HCT116 (cell line): ENCODE measurements at regions of chr4 and their contacts with region 1.

Region 1: GRCh38 chr4:114780205-114780604 is 181.6 kb downstream of the UGT8 start:
- DNase-seq: peak; percentile 24
- ATAC-seq: peak; percentile 87
- H3K4me3 ChIP-seq: no peak overlapping the region
- H3K27ac ChIP-seq: no peak overlapping the region
- H3K4me1 ChIP-seq: no peaks in the 10 kb centered on the region
- H3K27me3 ChIP-seq: no peaks in the 10 kb centered on the region
- CTCF ChIP-seq: peak; percentile 39 to 75 (median 44); a peak in 4 of 6 replicates
- POLR2A ChIP-seq: no peak
- RAD21 ChIP-seq: peak; percentile 82

Region 2: DNA sequence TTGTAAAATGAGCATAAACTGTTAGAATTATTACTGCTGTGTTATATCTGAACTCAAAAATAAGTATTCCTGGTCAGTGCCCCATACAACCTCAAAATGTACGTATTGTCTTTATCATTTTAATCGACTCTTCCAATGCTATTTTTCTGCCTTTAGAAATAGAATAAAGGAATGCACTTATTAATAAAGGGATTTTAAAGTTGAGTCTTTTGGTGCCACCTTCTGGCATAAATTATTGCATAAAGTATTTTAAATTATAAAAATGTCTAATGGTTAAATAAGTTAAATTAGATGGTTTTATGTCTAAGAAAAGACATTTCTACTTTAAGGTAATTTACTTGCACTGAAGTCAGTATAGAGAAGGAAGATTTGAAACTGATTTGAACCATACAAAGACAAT is 757.2 kb after region 1 on chr4:
- CTCF ChIA-PET with region 1: interaction called, 7 read pairs
- POLR2A ChIA-PET with region 1: no interaction called
- RAD21 ChIA-PET with region 1: no interaction called
- intact Hi-C with region 1: loop called (anchors 5 kb)
- DNase-seq: peak; percentile 12
- ATAC-seq: no peak
- H3K4me3 ChIP-seq: no peak overlapping the region
- H3K27ac ChIP-seq: no peak overlapping the region
- H3K4me1 ChIP-seq: no peaks in the 10 kb centered on the region
- H3K27me3 ChIP-seq: no peaks in the 10 kb centered on the region
- CTCF ChIP-seq: peak in 1 of 3 experiments; percentile 39; a peak in 2 of 6 replicates
- POLR2A ChIP-seq: no peak
- RAD21 ChIP-seq: peak; percentile 60

Region 3: DNA sequence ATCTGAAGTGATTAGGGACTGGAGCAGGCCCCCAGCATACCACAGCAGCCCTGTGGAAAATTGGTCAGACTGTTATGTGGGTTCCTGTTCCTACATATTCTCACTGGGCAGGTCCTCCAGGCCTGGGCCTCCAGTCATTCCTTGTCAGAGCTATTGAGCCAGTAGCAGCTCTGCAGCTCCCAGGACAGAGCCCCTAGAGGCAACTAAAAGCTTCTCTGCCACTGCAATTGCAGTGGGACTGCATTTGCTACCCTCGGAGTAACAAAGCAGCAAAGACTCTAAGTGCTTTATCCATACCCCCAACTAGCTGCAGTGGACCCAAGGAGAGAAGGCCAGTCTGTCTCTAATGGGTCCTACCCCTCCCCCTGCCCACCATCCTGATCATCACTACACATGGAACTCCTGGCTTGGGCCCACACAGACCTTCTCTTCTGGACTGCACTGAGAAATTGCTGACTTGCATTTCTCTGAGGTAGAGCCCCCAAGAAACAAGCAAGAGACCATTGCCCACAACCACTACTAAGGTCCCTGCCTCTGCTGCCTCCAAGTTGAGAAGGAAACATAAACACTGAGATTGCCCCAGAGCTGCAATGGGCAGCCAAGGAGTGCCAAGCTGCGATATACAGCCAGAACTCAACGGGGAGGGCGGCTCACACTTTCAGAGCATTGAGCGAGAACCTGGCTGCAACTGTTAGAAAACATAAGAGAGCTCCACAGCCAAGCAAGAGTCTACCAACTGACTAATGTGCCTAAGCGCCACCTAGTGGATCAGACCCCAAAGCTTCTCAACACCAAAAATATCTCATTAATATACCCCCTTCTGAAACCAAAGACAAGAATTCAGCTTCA is 1071.9 kb after region 1 on chr4:
- CTCF ChIA-PET with region 1: interaction called, 10 read pairs
- POLR2A ChIA-PET with region 1: no interaction called
- RAD21 ChIA-PET with region 1: no interaction called
- intact Hi-C with region 1: loop called (anchors 5 kb)
- DNase-seq: peak; percentile 51
- ATAC-seq: peak; percentile 87
- H3K4me3 ChIP-seq: no peak overlapping the region
- H3K27ac ChIP-seq: no peak overlapping the region
- H3K4me1 ChIP-seq: no peaks in the 10 kb centered on the region
- H3K27me3 ChIP-seq: no peaks in the 10 kb centered on the region
- CTCF ChIP-seq: peak; percentile 25 to 76 (median 68); a peak in 5 of 6 replicates
- POLR2A ChIP-seq: no peak
- RAD21 ChIP-seq: peak; percentile 67